ENCODE measurements at regions of chr15 and their contacts with region 1.

Region 1: GRCh38 chr15:62389885-62390790 is 225.1 kb upstream of the C2CD4B start:
- DNase-seq: peak; percentile 63 to 78
- ATAC-seq: peak; percentile 77 to 92 (median 85)
- H3K4me3 ChIP-seq: peak within 1 kb of the TSS; percentile 63 to 99 (median 88)
- H3K27ac ChIP-seq: peak within 1 kb of the TSS; percentile 56 to 94 (median 88)
- H3K4me1 ChIP-seq: peaks cover 0 to 30% (median 21%) of the 10 kb centered on the region in 9 donors
- H3K27me3 ChIP-seq: peaks cover 0 to 22% (median 0%) of the 10 kb centered on the region in 7 donors
- CTCF ChIP-seq: no peak

Region 2: DNA sequence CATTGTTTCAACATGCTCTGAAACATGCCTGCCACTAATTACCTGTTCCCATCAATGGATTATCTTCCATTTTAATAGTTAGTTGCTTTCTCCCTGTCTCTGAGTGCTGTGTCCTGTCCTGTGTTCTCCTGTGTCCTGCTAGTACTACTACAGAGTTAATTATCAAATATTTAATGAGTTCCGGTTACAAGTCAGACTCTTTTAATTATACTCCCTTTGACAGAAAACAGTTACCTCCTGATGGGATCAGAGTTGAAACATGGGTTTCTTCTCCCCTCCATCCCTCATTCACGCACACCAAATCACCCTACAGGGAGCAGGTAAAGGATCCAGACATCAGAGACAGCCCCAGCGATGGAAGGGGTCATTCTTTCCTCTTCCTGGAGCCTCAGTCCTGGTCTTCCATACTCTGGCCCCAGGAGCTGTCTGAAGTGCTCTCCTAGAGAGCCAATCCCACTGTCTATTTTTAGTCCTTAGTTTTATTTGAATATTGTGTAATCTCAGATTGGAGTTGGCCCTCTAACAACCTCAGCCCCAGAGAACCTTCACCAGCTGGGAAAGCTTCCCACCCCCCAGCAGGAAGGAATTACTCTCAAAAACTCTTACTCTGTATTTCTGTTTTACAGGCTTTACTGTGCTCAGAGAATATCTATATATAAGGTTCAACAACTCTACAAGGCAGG is 88.0 kb before region 1 on chr15:
- intact Hi-C with region 1: no loop called
- DNase-seq: no peak
- ATAC-seq: peak in 7 of 8 donors; percentile 55 to 88 (median 72)
- H3K4me3 ChIP-seq: no peak overlapping the region
- H3K27ac ChIP-seq: no peak overlapping the region
- H3K4me1 ChIP-seq: peaks cover 0 to 19% (median 8%) of the 10 kb centered on the region in 9 donors
- H3K27me3 ChIP-seq: no peaks in the 10 kb centered on the region
- CTCF ChIP-seq: no peak

Region 3: DNA sequence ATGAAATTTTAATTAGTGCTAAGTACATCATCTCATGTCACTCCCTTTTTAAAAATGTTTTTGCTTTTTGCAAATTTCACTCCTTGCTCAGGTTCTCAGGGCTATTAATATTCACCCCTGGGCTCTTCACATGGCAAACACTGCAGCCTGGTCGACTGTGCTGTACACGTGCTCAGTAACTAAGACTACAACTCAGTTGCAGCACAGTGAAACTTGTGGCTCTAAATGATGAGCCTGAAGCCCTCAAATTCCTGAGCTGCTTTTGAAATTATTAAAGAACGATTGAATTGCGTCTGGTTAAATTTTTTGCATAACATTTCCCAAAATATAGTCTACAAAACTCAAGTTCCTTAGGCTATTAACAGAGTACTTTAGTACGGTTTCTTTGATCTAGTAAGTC is 65.8 kb before region 1 on chr15:
- intact Hi-C with region 1: no loop called
- DNase-seq: no peak
- ATAC-seq: no peak
- H3K4me3 ChIP-seq: no peak overlapping the region
- H3K27ac ChIP-seq: no peak overlapping the region
- H3K4me1 ChIP-seq: no peaks in the 10 kb centered on the region
- H3K27me3 ChIP-seq: peaks cover 0 to 26% (median 8%) of the 10 kb centered on the region in 7 donors
- CTCF ChIP-seq: no peak

Region 4: GRCh38 chr15:62453981-62454380 is 63.8 kb after region 1 on chr15:
- intact Hi-C with region 1: loop called in 2 of 10 experiments (anchors 5 kb)
- DNase-seq: no peak
- ATAC-seq: peak in 5 of 8 donors; percentile 7 to 34 (median 18)
- H3K4me3 ChIP-seq: no peak overlapping the region
- H3K27ac ChIP-seq: peak overlapping the region in 9 of 10 donors; percentile 25 to 86 (median 70)
- H3K4me1 ChIP-seq: peaks cover 6 to 74% (median 58%) of the 10 kb centered on the region in 9 donors
- H3K27me3 ChIP-seq: no peaks in the 10 kb centered on the region
- CTCF ChIP-seq: no peak

Region 5: DNA sequence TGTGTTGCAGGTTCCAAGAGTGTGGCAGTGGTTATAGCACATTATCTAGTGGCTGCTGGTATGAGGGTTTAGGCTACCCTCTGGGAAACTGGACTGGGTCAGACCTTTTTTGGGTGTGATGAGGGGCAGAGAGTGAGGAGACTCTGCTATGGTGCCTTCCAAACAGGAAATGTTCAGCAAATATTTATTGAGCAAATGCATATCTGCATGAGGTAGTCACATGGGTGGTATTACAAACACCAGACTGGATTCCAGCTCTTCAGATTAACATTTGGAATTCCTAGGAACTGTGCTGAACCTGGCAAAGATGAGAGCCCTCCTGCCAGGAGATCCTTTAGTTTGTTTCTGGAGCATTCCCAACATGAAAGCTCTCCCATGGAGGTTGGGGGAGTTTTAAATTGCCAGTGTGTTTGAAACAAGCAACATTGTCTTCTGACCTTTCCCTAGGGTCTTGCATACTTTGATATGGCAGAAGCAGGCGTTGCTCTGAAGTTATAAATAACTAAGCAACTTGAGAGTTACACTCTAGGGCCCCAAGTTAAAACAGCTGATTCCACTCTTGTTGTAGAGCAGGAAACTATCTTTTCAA is 116.2 kb after region 1 on chr15:
- intact Hi-C with region 1: loop called in 3 of 10 experiments (anchors 5 to 10 kb)
- DNase-seq: peak in 1 of 2 donors; percentile 27
- ATAC-seq: peak; percentile 56 to 82 (median 76)
- H3K4me3 ChIP-seq: peak overlapping the region in 2 of 10 donors; percentile 1 to 5
- H3K27ac ChIP-seq: peak overlapping the region; percentile 15 to 87 (median 86)
- H3K4me1 ChIP-seq: peaks cover 9 to 85% (median 45%) of the 10 kb centered on the region in 9 donors
- H3K27me3 ChIP-seq: no peaks in the 10 kb centered on the region
- CTCF ChIP-seq: no peak

Region 6: GRCh38 chr15:62533687-62534086 is 143.5 kb after region 1 on chr15:
- intact Hi-C with region 1: loop called in 1 of 10 experiments (anchors 10 kb)
- DNase-seq: no peak
- ATAC-seq: peak in 3 of 8 donors; percentile 14 to 29 (median 18)
- H3K4me3 ChIP-seq: no peak overlapping the region
- H3K27ac ChIP-seq: no peak overlapping the region
- H3K4me1 ChIP-seq: peaks cover 0 to 21% (median 14%) of the 10 kb centered on the region in 9 donors
- H3K27me3 ChIP-seq: no peaks in the 10 kb centered on the region
- CTCF ChIP-seq: no peak

Region 7: DNA sequence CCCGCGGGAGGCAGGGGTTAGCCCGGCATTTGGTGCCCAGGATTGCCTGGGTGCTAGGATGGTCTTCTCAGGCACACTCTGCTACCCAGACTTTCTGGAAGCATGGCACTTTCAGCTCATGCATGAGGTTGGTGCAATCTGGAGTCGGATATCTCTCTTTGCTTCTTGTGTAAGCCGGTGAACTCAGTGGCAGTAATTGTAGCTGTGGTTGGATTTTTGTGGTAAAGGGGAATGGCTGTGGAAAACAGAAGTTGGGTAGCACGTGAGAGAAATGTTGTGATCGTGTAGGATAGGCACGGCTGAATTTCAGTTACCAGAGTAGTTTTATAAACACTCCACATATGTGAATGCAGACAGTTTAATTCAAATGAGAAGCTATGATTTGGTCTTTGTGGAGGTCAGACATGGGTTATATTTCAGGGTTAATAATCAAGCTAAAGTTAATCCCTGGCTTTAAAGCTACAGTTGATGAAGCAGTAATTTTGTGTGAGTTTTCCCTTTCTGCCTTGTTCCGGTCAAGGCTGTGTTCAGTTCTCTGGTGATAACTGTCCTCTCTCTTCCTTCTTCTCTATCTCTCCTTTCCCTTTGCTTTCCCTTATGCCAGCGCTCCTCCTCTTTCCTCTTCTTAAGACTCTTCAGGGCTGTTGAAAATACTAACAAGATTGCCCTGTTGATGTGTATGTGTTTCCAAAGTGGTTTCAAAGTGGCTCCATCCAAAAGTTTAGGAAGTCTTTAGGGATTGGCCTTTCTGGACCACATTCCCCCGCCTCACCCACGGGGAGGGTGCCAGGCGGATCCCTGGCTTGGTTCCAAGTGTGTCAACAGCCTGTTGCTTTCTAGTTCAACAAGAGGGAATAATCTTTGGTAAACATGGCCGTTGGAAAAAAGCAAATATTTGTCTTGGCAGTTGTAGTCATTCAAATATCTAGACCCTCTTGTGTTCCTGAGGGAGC is 179.6 kb after region 1 on chr15:
- intact Hi-C with region 1: loop called in 2 of 10 experiments (anchors 10 kb)
- DNase-seq: peak; percentile 57 to 82
- ATAC-seq: peak in 7 of 8 donors; percentile 28 to 59 (median 38)
- H3K4me3 ChIP-seq: no peak overlapping the region
- H3K27ac ChIP-seq: peak overlapping the region in 4 of 10 donors; percentile 0 to 35 (median 22)
- H3K4me1 ChIP-seq: peaks cover 0 to 45% (median 19%) of the 10 kb centered on the region in 9 donors
- H3K27me3 ChIP-seq: no peaks in the 10 kb centered on the region
- CTCF ChIP-seq: no peak

Region 8: GRCh38 chr15:62691008-62691407 is 300.9 kb after region 1 on chr15:
- intact Hi-C with region 1: loop called in 2 of 10 experiments (anchors 5 to 10 kb)
- DNase-seq: no peak
- ATAC-seq: peak in 1 of 8 donors; percentile 45
- H3K4me3 ChIP-seq: no peak overlapping the region
- H3K27ac ChIP-seq: no peak overlapping the region
- H3K4me1 ChIP-seq: no peaks in the 10 kb centered on the region
- H3K27me3 ChIP-seq: no peaks in the 10 kb centered on the region
- CTCF ChIP-seq: peak in 7 of 9 donors; percentile 10 to 54 (median 30)

Region 9: GRCh38 chr15:62742409-62743171 is 352.5 kb after region 1 on chr15:
- intact Hi-C with region 1: loop called in 3 of 10 experiments (anchors 5 kb)
- DNase-seq: peak; percentile 36 to 45
- ATAC-seq: peak; percentile 63 to 83 (median 72)
- H3K4me3 ChIP-seq: no peak overlapping the region
- H3K27ac ChIP-seq: peak overlapping the region in 3 of 10 donors; percentile 6 to 62 (median 15)
- H3K4me1 ChIP-seq: peaks cover 0 to 24% (median 16%) of the 10 kb centered on the region in 9 donors
- H3K27me3 ChIP-seq: no peaks in the 10 kb centered on the region
- CTCF ChIP-seq: peak; percentile 64 to 85 (median 81)